IMR-90 (cell line): ENCODE measurements at regions of chr2 and their contacts with region 1.

Region 1: DNA sequence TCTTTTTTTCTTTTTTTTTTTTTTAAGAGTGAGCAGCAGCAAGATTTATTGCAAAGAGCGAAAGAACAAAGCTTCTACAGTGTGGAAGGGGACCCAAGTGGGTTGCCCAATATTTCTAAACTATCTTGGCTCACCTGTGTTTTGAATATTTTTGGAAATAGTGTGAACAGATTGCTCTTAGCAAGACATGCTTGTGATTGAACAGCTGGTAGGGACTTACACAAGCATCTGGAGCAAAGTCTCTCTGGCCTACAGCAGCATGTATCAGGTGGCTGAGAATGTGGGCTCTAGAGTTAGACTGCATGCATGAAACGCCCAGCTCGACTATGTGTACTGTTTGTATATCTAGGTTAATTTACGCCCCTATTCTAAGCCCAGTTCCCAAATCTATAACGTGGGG is 40.3 kb upstream of the FBXO11 start:
- DNase-seq: no peak
- ATAC-seq: no peak
- H3K4me3 ChIP-seq: no peak overlapping the region
- H3K27ac ChIP-seq: no peak overlapping the region
- H3K4me1 ChIP-seq: no peaks in the 10 kb centered on the region
- H3K27me3 ChIP-seq: no peaks in the 10 kb centered on the region
- CTCF ChIP-seq: no peak
- POLR2A ChIP-seq: no peak
- RAD21 ChIP-seq: no peak

Region 2: DNA sequence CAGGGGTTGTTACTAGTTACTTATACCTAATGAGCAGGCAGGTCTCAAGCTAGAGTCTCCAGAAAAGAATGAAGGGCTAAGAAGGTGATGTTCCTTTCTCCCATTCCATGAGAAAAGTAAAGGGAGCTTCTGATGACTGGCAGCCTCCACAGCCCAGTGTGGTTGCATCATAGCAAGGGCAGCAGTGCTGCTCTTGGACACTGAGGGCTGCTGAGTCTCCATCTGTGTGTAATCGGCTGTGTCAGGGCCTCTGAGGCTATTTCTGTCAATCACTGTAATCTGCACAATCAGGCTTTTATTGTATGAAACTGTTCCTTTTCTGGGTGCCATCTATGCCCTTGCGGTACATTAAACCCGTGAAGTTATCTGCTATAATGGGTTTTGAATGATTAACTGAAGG is 123.8 kb after region 1 on chr2:
- CTCF ChIA-PET with region 1: no interaction called
- POLR2A ChIA-PET with region 1: no interaction called
- dilution Hi-C with region 1: no loop called
- in situ Hi-C with region 1: loop called (anchors 10 kb)
- intact Hi-C with region 1: no loop called
- DNase-seq: no peak
- ATAC-seq: no peak
- H3K4me3 ChIP-seq: no peak overlapping the region
- H3K27ac ChIP-seq: no peak overlapping the region
- H3K4me1 ChIP-seq: no peaks in the 10 kb centered on the region
- H3K27me3 ChIP-seq: peaks cover 15% of the 10 kb centered on the region
- CTCF ChIP-seq: no peak
- POLR2A ChIP-seq: no peak
- RAD21 ChIP-seq: no peak